Thyroid gland (tissue), 4 donors: ENCODE measurements at regions of chr2 and their contacts with region 1.

Region 1: GRCh38 chr2:134118279-134119116 is 135.4 kb upstream of the MGAT5 start:
- DNase-seq: peak; percentile 91 to 93
- H3K4me3 ChIP-seq: no peak overlapping the region
- H3K27ac ChIP-seq: peak overlapping the region in 2 of 3 donors; percentile 32 to 95
- H3K4me1 ChIP-seq: peaks cover 20 to 24% of the 10 kb centered on the region in 2 donors
- H3K27me3 ChIP-seq: no peaks in the 10 kb centered on the region
- CTCF ChIP-seq: peak; percentile 58 to 94 (median 84)
- POLR2A ChIP-seq: no peak

Region 2: GRCh38 chr2:133641497-133641896 is 477.0 kb before region 1 on chr2:
- intact Hi-C with region 1: no loop called
- DNase-seq: no peak
- H3K4me3 ChIP-seq: no peak overlapping the region
- H3K27ac ChIP-seq: no peak overlapping the region
- H3K4me1 ChIP-seq: no peaks in the 10 kb centered on the region
- H3K27me3 ChIP-seq: no peaks in the 10 kb centered on the region
- CTCF ChIP-seq: no peak
- POLR2A ChIP-seq: no peak

Region 3: GRCh38 chr2:133886735-133887660 is 231.5 kb before region 1 on chr2:
- intact Hi-C with region 1: loop called (anchors 10 kb)
- DNase-seq: peak; percentile 83 to 90
- H3K4me3 ChIP-seq: no peak overlapping the region
- H3K27ac ChIP-seq: peak overlapping the region in 1 of 3 donors; percentile 12
- H3K4me1 ChIP-seq: peaks cover 0 to 13% of the 10 kb centered on the region in 2 donors
- H3K27me3 ChIP-seq: no peaks in the 10 kb centered on the region
- CTCF ChIP-seq: peak; percentile 29 to 67 (median 57)
- POLR2A ChIP-seq: no peak

Region 4: DNA sequence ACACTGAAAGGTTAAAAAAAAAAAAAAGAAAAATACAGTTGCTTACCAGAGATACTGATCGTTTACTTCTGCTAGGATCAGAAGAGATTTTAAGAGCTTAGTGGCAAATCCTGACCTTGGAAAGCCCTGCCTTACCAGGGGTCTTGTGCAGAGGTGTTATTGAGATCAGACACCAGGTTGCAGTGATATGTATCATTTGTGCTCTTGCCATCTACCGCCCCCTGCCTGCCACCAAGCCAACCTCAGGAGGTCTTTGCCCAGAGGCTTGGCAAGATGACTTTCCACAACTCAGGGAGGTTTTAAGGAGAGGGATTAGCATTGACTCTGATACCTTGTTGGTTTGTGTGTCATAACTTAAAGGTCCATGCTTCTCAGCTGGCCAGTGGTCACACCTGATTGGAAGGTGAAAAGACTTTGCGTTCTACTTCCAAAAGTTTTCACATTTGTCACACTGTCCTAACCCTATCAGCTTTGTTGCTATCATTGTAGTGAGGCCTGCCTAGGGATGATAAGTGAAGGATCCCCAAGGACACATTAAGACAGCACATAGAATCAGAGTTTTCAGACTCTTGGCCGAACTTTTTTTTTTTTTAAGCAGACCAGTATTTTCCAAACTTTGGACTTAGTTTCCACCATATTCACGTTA is 89.2 kb after region 1 on chr2:
- intact Hi-C with region 1: loop called (anchors 10 kb)
- DNase-seq: peak; percentile 50 to 60
- H3K4me3 ChIP-seq: no peak overlapping the region
- H3K27ac ChIP-seq: no peak overlapping the region
- H3K4me1 ChIP-seq: peaks cover 15 to 27% of the 10 kb centered on the region in 2 donors
- H3K27me3 ChIP-seq: no peaks in the 10 kb centered on the region
- CTCF ChIP-seq: peak in 3 of 6 experiments; percentile 50 to 54 (median 53)
- POLR2A ChIP-seq: no peak

Region 5: DNA sequence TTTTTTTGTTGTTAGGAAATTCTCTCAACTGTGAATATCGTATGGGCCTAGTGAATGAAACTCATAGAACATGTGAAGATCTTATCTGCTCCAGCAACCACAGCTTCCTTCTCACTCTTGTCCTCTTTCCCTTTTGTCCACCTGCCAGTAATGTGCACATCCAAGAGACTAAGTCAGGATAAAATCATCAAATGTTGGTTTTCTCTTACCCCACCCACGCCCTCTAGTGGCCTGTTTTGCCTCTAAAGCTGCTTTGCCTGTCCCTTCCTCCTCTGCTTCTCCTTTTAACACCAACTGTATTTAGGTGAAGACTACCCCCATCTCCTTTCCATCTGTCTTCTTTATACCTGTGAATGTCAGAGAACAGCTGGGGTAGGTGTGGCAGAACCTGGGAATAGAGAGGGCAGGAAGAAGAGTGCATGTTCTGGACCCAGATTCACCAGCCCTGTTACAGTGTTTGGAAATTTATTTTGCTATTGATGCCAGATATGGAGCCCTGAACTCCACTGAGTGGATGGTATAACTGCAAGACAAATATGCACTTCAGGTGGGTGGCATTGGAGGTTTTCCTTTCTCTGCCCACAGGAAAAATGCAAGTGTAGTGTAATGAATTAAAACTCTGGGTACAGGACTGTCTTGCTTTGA is 127.0 kb after region 1 on chr2:
- intact Hi-C with region 1: loop called (anchors 5 kb)
- DNase-seq: peak; percentile 82 to 86
- H3K4me3 ChIP-seq: no peak overlapping the region
- H3K27ac ChIP-seq: no peak overlapping the region
- H3K4me1 ChIP-seq: peaks cover 5 to 15% of the 10 kb centered on the region in 2 donors
- H3K27me3 ChIP-seq: no peaks in the 10 kb centered on the region
- CTCF ChIP-seq: peak; percentile 52 to 85 (median 66)
- POLR2A ChIP-seq: no peak

Region 6: DNA sequence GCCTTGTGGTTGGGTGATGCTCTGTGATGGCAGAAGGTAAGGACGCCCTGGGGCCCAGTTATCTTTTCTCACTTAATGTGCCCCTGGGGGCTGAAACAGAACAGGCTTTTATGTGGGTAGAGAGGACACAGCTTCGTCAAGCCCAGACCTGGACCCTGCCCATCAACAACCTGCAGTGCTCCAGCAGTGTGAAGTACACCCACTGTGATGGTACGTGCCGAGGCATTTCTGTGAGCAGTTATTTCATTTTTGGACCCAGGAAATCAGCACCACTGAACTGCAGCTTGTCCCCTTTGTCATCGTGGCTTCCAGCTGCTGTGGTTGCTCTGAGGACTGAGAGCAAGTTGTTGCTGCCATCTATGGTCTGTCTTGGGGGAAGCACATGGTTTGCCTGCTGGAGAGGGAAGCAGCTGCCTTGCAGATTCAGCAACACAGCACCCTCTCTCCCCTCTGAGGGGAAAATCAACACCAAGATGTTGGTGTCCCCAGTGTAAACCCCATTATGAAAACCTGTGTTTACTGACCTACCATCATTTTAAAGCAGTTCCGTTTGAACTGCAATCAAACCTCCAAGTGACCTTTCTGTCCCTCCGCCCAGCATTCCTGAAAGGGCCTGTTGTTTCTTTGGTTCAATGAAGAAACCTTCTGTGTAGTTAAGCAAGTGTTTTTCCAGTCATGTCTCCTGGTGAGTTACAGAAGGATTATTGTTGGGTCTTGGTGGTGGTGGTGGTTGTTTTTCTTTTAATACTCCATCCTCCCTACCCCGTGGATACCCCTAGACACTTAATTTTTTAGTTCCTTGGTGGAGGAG is 293.5 kb after region 1 on chr2:
- intact Hi-C with region 1: loop called (anchors 5 kb)
- DNase-seq: peak; percentile 67 to 70
- H3K4me3 ChIP-seq: no peak overlapping the region
- H3K27ac ChIP-seq: peak overlapping the region in 1 of 3 donors; percentile 39
- H3K4me1 ChIP-seq: peaks cover 0 to 18% of the 10 kb centered on the region in 2 donors
- H3K27me3 ChIP-seq: no peaks in the 10 kb centered on the region
- CTCF ChIP-seq: peak in 4 of 6 experiments; percentile 70 to 88 (median 79)
- POLR2A ChIP-seq: no peak

Region 7: GRCh38 chr2:134758633-134759032 is 640.1 kb after region 1 on chr2:
- intact Hi-C with region 1: no loop called
- DNase-seq: no peak
- H3K4me3 ChIP-seq: no peak overlapping the region
- H3K27ac ChIP-seq: no peak overlapping the region
- H3K4me1 ChIP-seq: no peaks in the 10 kb centered on the region
- H3K27me3 ChIP-seq: no peaks in the 10 kb centered on the region
- CTCF ChIP-seq: no peak
- POLR2A ChIP-seq: no peak